ENCODE measurements at regions of chr4 and their contacts with region 1.

Region 1: DNA sequence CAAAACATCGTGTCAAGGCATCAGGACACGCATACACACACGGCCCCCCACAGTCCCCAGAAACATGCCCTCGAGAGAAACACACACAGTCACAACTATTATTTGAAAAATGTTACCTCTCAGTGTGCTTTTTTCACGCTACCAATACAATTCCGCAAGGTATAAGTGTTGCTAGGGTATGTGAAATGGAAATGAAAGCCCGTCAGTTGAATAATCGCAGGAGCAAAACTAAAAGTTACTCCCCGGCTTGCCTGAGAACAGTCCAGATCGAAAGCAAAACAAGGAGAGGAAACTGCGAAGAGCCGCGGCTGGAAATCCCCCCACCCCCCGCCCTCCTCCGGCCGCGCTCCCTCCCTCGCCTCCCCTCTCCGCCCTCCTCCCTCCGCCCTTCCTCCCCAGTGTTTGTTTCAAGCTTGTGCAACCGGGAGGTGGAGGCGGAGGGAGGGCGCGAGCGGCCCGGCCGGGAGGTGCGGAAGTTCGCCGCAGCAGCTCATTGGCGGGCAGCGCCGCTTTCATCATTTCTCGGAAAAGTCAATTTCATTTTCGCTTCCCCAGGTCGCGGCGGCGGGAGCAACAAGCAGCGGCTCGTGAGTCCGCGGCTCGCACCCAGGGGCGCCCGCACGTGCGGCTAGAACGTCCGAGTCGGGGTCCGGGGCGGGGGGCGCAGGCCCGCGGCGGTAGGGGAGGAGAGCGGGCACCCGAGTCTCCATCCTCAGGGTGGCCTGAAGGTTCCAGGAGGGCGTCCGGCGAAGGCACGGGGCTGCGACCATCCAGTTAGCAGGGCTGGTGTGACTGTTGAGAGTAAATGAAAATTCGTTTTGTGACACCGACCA is at the start of gene IRF2:
- DNase-seq: peak; percentile 88 to 99
- ATAC-seq: peak; percentile 79 to 94 (median 84)
- H3K4me3 ChIP-seq: peak within 1 kb of the TSS; percentile 99
- H3K4me3 Mint-ChIP-seq: peak within 1 kb of the TSS; percentile 99
- H3K27ac ChIP-seq: peak within 1 kb of the TSS; percentile 97
- H3K27ac Mint-ChIP-seq: peak within 1 kb of the TSS; percentile 95 to 99
- H3K4me1 ChIP-seq: peaks cover 35% of the 10 kb centered on the region
- H3K4me1 Mint-ChIP-seq: peaks cover 55 to 57% of the 10 kb centered on the region in 2 donors
- H3K27me3 ChIP-seq: no peaks in the 10 kb centered on the region
- H3K27me3 Mint-ChIP-seq: no peaks in the 10 kb centered on the region
- CTCF ChIP-seq: no peak
- total RNA-seq, gene IRF2: 50.6 to 68.5 (median 59.8) TPM

Region 2: DNA sequence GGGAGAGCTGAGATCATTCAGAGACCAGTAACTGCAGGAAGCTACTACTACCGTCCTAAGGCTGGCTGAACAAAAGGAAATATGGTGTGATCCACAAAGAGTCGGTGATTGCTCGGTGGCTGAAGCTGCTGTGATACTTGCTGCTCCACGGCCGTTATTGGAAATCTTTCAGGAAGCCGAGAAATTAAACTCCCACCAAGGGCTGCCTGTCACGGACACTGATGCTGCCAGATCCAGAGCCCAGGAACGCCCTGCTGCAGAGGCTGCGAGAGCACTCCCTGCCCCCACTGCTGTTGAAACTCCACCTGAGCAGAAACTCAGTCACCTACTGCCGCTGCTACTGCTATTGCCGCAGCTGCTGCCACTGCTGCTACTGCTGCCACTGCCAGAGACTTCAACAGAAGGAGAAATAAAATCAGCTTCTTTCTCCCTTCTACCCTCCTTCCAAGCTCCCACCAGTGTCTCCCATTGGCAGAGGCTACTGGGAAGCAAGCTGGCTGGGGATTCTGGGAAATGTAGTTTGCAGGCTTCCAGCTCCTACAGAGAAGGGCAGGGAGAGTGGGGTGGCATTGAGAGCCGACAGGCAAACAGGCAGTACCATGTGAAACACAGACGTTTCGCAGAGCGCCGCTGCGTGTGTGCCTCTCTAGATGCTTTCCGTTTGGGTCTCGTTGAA is 130.8 kb before region 1 on chr4:
- intact Hi-C with region 1: loop called (anchors 10 kb)
- DNase-seq: peak in 1 of 2 donors; percentile 61
- ATAC-seq: peak; percentile 50 to 65 (median 59)
- H3K4me3 ChIP-seq: peak overlapping the region; percentile 43
- H3K4me3 Mint-ChIP-seq: peak overlapping the region; percentile 89
- H3K27ac ChIP-seq: no peak overlapping the region
- H3K27ac Mint-ChIP-seq: peak overlapping the region; percentile 82 to 85
- H3K4me1 ChIP-seq: peaks cover 41% of the 10 kb centered on the region
- H3K4me1 Mint-ChIP-seq: peaks cover 52% of the 10 kb centered on the region in 2 donors
- H3K27me3 ChIP-seq: no peaks in the 10 kb centered on the region
- H3K27me3 Mint-ChIP-seq: no peaks in the 10 kb centered on the region
- CTCF ChIP-seq: no peak

Region 3: GRCh38 chr4:184538023-184538599 is 63.6 kb after region 1 on chr4:
- intact Hi-C with region 1: loop called (anchors 1 kb)
- DNase-seq: peak; percentile 62 to 83
- ATAC-seq: peak; percentile 73 to 87 (median 79)
- H3K4me3 ChIP-seq: peak overlapping the region; percentile 70
- H3K4me3 Mint-ChIP-seq: peak overlapping the region; percentile 98
- H3K27ac ChIP-seq: peak overlapping the region; percentile 95
- H3K27ac Mint-ChIP-seq: peak overlapping the region; percentile 99 to 100
- H3K4me1 ChIP-seq: peaks cover 21% of the 10 kb centered on the region
- H3K4me1 Mint-ChIP-seq: peaks cover 45% of the 10 kb centered on the region in 2 donors
- H3K27me3 ChIP-seq: no peaks in the 10 kb centered on the region
- H3K27me3 Mint-ChIP-seq: no peaks in the 10 kb centered on the region
- CTCF ChIP-seq: peak; percentile 74

Region 4: GRCh38 chr4:184733654-184734524 is 259.4 kb after region 1 on chr4 and contains the start of gene CENPU:
- intact Hi-C with region 1: loop called (anchors 10 kb)
- DNase-seq: peak; percentile 95 to 97
- ATAC-seq: peak; percentile 95 to 98 (median 95)
- H3K4me3 ChIP-seq: peak within 1 kb of the TSS; percentile 69
- H3K4me3 Mint-ChIP-seq: peak within 1 kb of the TSS; percentile 91
- H3K27ac ChIP-seq: peak within 1 kb of the TSS; percentile 41
- H3K27ac Mint-ChIP-seq: peak within 1 kb of the TSS; percentile 73 to 90
- H3K4me1 ChIP-seq: peaks cover 9% of the 10 kb centered on the region
- H3K4me1 Mint-ChIP-seq: peaks cover 11 to 16% of the 10 kb centered on the region in 2 donors
- H3K27me3 ChIP-seq: no peaks in the 10 kb centered on the region
- H3K27me3 Mint-ChIP-seq: no peaks in the 10 kb centered on the region
- CTCF ChIP-seq: no peak
- total RNA-seq, gene CENPU: 6.5 to 12.1 (median 10.3) TPM